Endothelial cell of umbilical vein (primary cell): ENCODE measurements at regions of chr1 and their contacts with region 1.

Region 1: DNA sequence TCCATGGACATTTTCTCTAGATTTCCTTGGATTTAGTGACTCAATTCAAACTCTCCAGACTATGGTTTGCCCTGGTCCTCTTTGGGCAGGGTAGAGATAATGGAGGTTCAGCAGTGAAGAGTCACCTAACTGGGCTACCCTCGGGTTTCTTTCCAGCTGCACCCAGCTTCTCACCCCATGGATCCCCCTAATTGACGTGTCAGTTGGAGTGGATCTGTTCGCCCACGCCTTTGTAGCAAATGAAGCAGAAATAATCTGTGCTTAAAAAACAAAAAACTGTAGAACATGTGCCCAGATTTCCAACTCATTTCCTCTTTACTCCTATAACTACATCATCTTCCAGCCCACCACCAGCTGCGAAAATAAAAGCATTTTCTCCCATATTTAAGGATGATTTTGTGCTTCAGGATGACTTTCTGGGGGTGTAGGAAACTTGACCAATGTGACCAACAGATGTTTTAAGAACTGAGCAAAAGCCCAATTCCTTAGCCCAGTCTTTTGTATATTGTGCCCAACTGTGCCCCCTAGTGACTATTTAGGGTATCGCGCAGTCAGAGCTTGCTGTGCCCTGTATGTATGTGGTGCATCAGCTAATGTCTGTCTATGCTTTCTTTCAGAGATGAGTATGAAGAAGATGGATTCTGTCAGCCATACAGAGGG is 66.5 kb upstream of the UBE2U start:
- DNase-seq: peak; percentile 82
- H3K4me3 ChIP-seq: no peak overlapping the region
- H3K27ac ChIP-seq: no peak overlapping the region
- H3K4me1 ChIP-seq: no peaks in the 10 kb centered on the region
- H3K27me3 ChIP-seq: no peaks in the 10 kb centered on the region
- CTCF ChIP-seq: peak; percentile 89
- POLR2A ChIP-seq: no peak

Region 2: GRCh38 chr1:63615768-63616420 is 521.0 kb before region 1 on chr1:
- CTCF ChIA-PET with region 1: interaction called, 9 read pairs
- POLR2A ChIA-PET with region 1: no interaction called
- dilution Hi-C with region 1: no loop called
- intact Hi-C with region 1: loop called (anchors 1 kb)
- DNase-seq: peak; percentile 82
- H3K4me3 ChIP-seq: no peak overlapping the region
- H3K27ac ChIP-seq: no peak overlapping the region
- H3K4me1 ChIP-seq: no peaks in the 10 kb centered on the region
- H3K27me3 ChIP-seq: no peaks in the 10 kb centered on the region
- CTCF ChIP-seq: peak; percentile 50 to 59
- POLR2A ChIP-seq: no peak

Region 3: DNA sequence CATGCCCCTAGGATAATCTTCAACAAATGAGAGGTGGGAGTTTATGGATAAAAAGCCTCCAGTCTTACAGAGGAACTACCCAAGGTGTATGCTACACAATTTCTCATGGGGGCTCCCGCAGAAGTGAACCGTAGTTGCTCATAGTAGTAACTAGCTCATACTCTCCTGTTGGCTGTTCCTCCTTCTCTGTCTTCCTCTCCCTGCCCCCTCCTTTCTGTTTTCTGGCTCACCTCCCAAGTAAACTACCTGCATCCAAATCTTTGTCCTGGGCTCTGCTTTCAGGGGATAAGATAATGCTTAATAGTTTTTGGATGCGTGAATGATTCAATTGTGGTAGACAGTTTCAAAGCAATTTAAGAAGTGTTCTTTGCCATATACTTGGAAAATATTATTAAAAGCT is 453.1 kb before region 1 on chr1:
- CTCF ChIA-PET with region 1: interaction called, 11 read pairs
- POLR2A ChIA-PET with region 1: no interaction called
- dilution Hi-C with region 1: loop called (anchors 25 kb)
- intact Hi-C with region 1: no loop called
- DNase-seq: no peak
- H3K4me3 ChIP-seq: no peak overlapping the region
- H3K27ac ChIP-seq: no peak overlapping the region
- H3K4me1 ChIP-seq: no peaks in the 10 kb centered on the region
- H3K27me3 ChIP-seq: peaks cover 0 to 6% of the 10 kb centered on the region in 2 experiments
- CTCF ChIP-seq: no peak
- POLR2A ChIP-seq: no peak

Region 4: DNA sequence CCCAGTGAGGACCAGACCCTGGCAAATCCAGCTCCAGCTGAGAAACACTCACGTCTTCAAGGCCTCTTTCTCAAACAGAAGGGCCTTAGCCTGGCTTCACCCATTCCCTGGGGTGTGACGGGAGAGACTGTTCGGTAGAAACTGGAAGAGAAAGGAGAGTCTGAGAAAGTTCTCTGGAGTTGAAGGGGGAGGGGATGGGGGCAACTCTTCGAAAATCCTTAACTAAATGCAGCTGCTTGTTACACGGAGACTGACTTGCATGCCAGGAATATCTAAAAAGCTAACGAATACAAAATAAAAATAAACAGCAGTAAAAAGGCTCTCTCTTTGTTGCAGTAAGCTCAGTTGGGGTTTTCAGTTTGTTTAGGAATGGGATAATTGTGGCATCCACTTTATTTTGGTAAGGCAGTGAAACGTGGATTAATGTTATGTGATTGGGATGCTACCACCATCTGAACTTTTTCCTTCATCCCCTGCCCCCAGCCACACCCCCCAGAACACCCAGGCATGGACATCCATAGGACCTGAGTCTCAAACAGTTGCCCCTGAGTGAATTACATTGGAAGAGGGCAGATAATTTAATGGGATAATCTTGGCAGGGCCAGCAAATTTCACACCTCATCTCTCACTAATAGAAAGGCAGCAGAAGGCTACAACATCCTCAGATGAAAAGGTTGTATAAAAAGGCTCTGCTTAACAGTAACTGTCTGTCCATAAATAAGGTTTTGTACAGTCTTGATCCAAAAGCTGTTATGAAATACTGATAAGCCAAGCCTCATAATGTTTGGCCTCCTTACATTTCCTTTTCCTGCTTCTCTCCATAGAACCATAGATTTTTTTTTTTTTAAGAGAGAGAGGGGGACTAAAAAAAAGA is 357.3 kb before region 1 on chr1:
- CTCF ChIA-PET with region 1: interaction called, 13 read pairs
- POLR2A ChIA-PET with region 1: no interaction called
- dilution Hi-C with region 1: no loop called
- intact Hi-C with region 1: loop called (anchors 1 kb)
- DNase-seq: no peak
- H3K4me3 ChIP-seq: no peak overlapping the region
- H3K27ac ChIP-seq: no peak overlapping the region
- H3K4me1 ChIP-seq: peaks cover 8% of the 10 kb centered on the region
- H3K27me3 ChIP-seq: peaks cover 0 to 6% of the 10 kb centered on the region in 2 experiments
- CTCF ChIP-seq: no peak
- POLR2A ChIP-seq: no peak

Region 5: GRCh38 chr1:63935143-63935542 is 201.7 kb before region 1 on chr1:
- CTCF ChIA-PET with region 1: interaction called, 37 read pairs
- POLR2A ChIA-PET with region 1: no interaction called
- dilution Hi-C with region 1: no loop called
- intact Hi-C with region 1: loop called (anchors 5 kb)
- DNase-seq: no peak
- H3K4me3 ChIP-seq: no peak overlapping the region
- H3K27ac ChIP-seq: no peak overlapping the region
- H3K4me1 ChIP-seq: no peaks in the 10 kb centered on the region
- H3K27me3 ChIP-seq: no peaks in the 10 kb centered on the region
- CTCF ChIP-seq: no peak
- POLR2A ChIP-seq: no peak

Region 6: GRCh38 chr1:64163970-64164369 is 27.1 kb after region 1 on chr1:
- CTCF ChIA-PET with region 1: interaction called, 21 read pairs
- POLR2A ChIA-PET with region 1: no interaction called
- dilution Hi-C with region 1: no loop called
- intact Hi-C with region 1: no loop called
- DNase-seq: peak; percentile 6
- H3K4me3 ChIP-seq: no peak overlapping the region
- H3K27ac ChIP-seq: no peak overlapping the region
- H3K4me1 ChIP-seq: no peaks in the 10 kb centered on the region
- H3K27me3 ChIP-seq: no peaks in the 10 kb centered on the region
- CTCF ChIP-seq: peak in 1 of 2 donors; percentile 9
- POLR2A ChIP-seq: no peak

Region 7: DNA sequence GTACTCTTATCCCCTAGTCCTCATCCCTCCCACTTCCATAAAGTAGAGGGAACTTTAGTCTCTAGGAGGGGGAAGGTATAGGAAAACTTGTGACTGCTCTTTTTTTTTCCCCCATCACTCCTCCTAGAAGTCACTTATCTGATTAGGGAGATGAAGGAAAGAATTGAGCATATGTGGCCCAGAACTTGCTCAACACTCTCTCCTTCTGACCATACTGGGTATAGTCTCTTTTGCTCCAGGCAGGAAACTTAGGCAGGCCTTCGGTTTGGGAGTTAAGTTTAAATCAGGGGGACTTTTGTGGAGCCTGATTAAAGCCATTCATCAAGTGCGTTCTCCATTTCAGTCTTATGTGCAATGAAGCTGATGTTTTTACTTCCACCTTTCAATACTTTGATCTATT is 72.3 kb after region 1 on chr1:
- CTCF ChIA-PET with region 1: no interaction called
- POLR2A ChIA-PET with region 1: no interaction called
- dilution Hi-C with region 1: no loop called
- intact Hi-C with region 1: no loop called
- DNase-seq: no peak
- H3K4me3 ChIP-seq: no peak overlapping the region
- H3K27ac ChIP-seq: no peak overlapping the region
- H3K4me1 ChIP-seq: no peaks in the 10 kb centered on the region
- H3K27me3 ChIP-seq: peaks cover 0 to 7% of the 10 kb centered on the region in 2 experiments
- CTCF ChIP-seq: no peak
- POLR2A ChIP-seq: no peak